Breast epithelium (tissue), 4 donors: ENCODE measurements at regions of chr7 and their contacts with region 1.

Region 1: DNA sequence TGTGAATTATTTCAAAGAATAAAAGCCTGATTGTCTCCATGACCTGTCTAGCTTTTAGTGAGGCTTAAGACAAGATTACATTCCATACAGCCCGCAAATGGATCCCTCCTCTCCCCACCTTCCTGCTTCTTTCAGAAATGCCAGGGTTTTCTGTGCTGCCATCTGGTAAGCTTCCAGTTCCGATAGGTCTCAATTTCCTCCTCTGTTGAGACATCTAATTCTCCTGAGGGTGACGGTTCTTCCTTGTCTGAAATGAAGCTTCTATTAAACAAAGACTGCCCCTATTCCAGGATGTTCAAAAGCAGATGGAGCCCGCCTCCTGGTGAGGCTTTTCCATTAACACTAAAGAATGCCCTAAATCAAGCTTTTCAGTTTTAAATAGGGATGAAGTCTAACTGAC is 295.6 kb downstream of the PTPRN2 start:
- DNase-seq: no peak
- H3K4me3 ChIP-seq: no peak overlapping the region
- H3K27ac ChIP-seq: no peak overlapping the region
- H3K4me1 ChIP-seq: no peaks in the 10 kb centered on the region
- H3K27me3 ChIP-seq: no peaks in the 10 kb centered on the region
- CTCF ChIP-seq: no peak
- POLR2A ChIP-seq: no peak

Region 2: DNA sequence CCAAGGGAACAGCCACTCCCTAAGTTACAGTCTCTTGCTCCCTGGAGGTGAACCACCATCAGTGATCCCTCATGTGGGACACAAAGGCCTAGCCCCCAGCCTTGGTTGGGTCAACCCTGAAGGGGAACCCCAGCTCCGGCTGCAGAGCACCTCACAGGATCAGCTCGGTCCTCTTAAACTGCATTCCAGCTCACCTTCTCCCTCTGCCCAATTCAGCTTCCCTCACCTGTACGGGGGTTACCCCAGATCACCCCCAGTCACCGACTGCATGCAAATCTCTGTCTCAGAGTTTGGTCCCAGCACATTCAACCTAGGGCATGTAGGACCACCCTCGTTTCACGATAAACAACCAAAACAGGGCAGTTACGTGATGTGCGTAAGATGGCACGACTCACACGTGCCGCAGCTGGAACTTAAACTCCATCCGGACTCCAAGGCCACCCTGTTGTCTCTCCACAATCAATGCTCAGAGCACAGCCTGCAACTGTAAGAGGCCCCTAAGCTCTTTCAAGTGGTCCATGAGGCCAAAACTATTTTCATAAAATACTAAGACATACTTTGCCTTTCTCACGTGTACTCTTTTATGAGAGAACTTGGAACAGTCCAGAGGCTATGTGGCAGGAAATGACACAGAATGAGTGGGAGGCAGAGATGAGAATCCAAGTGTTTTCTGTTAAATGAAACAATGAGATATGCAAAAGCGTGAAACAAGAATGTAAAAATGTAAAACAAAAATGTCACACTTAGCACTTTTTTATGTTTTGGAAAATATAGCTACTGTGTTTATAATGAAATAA is 10.5 kb after region 1 on chr7:
- intact Hi-C with region 1: loop called (anchors 1 kb)
- DNase-seq: no peak
- H3K4me3 ChIP-seq: no peak overlapping the region
- H3K27ac ChIP-seq: no peak overlapping the region
- H3K4me1 ChIP-seq: no peaks in the 10 kb centered on the region
- H3K27me3 ChIP-seq: no peaks in the 10 kb centered on the region
- CTCF ChIP-seq: no peak
- POLR2A ChIP-seq: no peak

Region 3: GRCh38 chr7:158760936-158761335 is 468.9 kb after region 1 on chr7:
- intact Hi-C with region 1: no loop called
- DNase-seq: no peak
- H3K4me3 ChIP-seq: no peak overlapping the region
- H3K27ac ChIP-seq: no peak overlapping the region
- H3K4me1 ChIP-seq: no peaks in the 10 kb centered on the region
- H3K27me3 ChIP-seq: no peaks in the 10 kb centered on the region
- CTCF ChIP-seq: no peak
- POLR2A ChIP-seq: no peak